Heart right ventricle (tissue), 16 donors: ENCODE measurements at regions of chr7 and their contacts with region 1.

Region 1: GRCh38 chr7:92833024-92833765 is 3.2 kb downstream of the CDK6 start:
- DNase-seq: peak; percentile 85 to 87
- ATAC-seq: peak; percentile 73 to 91 (median 80)
- H3K4me3 ChIP-seq: peak overlapping the region; percentile 71 to 95 (median 88)
- H3K27ac ChIP-seq: peak overlapping the region; percentile 86 to 98 (median 92)
- H3K4me1 ChIP-seq: peaks cover 0 to 51% (median 47%) of the 10 kb centered on the region in 9 donors
- H3K27me3 ChIP-seq: no peaks in the 10 kb centered on the region
- CTCF ChIP-seq: peak; percentile 74 to 90 (median 89)

Region 2: GRCh38 chr7:92621026-92621540 is 212.1 kb before region 1 on chr7:
- intact Hi-C with region 1: loop called in 7 of 10 experiments (anchors 1 to 5 kb)
- DNase-seq: peak; percentile 24 to 74
- ATAC-seq: peak; percentile 86 to 90 (median 88)
- H3K4me3 ChIP-seq: no peak overlapping the region
- H3K27ac ChIP-seq: peak overlapping the region in 5 of 10 donors; percentile 8 to 58 (median 41)
- H3K4me1 ChIP-seq: peaks cover 3 to 29% (median 14%) of the 10 kb centered on the region in 9 donors
- H3K27me3 ChIP-seq: no peaks in the 10 kb centered on the region
- CTCF ChIP-seq: peak; percentile 60 to 86 (median 78)

Region 3: GRCh38 chr7:92633211-92633906 is 199.8 kb before region 1 on chr7:
- intact Hi-C with region 1: loop called in 2 of 10 experiments (anchors 5 kb)
- DNase-seq: peak in 1 of 2 donors; percentile 23
- ATAC-seq: peak; percentile 80 to 93 (median 90)
- H3K4me3 ChIP-seq: peak overlapping the region in 1 of 10 donors; percentile 2
- H3K27ac ChIP-seq: peak overlapping the region; percentile 13 to 70 (median 50)
- H3K4me1 ChIP-seq: peaks cover 9 to 57% (median 52%) of the 10 kb centered on the region in 9 donors
- H3K27me3 ChIP-seq: no peaks in the 10 kb centered on the region
- CTCF ChIP-seq: no peak

Region 4: GRCh38 chr7:92669616-92670165 is 163.5 kb before region 1 on chr7:
- intact Hi-C with region 1: no loop called
- DNase-seq: no peak
- ATAC-seq: peak in 1 of 8 donors; percentile 29
- H3K4me3 ChIP-seq: no peak overlapping the region
- H3K27ac ChIP-seq: no peak overlapping the region
- H3K4me1 ChIP-seq: peaks cover 0 to 18% (median 4%) of the 10 kb centered on the region in 9 donors
- H3K27me3 ChIP-seq: no peaks in the 10 kb centered on the region
- CTCF ChIP-seq: no peak

Region 5: GRCh38 chr7:92691578-92691977 is 141.6 kb before region 1 on chr7:
- intact Hi-C with region 1: loop called (anchors 1 to 5 kb)
- DNase-seq: no peak
- ATAC-seq: peak in 1 of 8 donors; percentile 47
- H3K4me3 ChIP-seq: no peak overlapping the region
- H3K27ac ChIP-seq: no peak overlapping the region
- H3K4me1 ChIP-seq: peaks cover 0 to 29% (median 16%) of the 10 kb centered on the region in 9 donors
- H3K27me3 ChIP-seq: no peaks in the 10 kb centered on the region
- CTCF ChIP-seq: peak; percentile 31 to 71 (median 54)

Region 6: GRCh38 chr7:92717993-92718716 is 115.0 kb before region 1 on chr7:
- intact Hi-C with region 1: loop called in 3 of 10 experiments (anchors 5 to 10 kb)
- DNase-seq: peak; percentile 24 to 80
- ATAC-seq: peak; percentile 80 to 95 (median 92)
- H3K4me3 ChIP-seq: peak overlapping the region in 9 of 10 donors; percentile 14 to 57 (median 42)
- H3K27ac ChIP-seq: peak overlapping the region; percentile 78 to 94 (median 88)
- H3K4me1 ChIP-seq: peaks cover under 1 to 54% (median 30%) of the 10 kb centered on the region in 9 donors
- H3K27me3 ChIP-seq: no peaks in the 10 kb centered on the region
- CTCF ChIP-seq: no peak

Region 7: DNA sequence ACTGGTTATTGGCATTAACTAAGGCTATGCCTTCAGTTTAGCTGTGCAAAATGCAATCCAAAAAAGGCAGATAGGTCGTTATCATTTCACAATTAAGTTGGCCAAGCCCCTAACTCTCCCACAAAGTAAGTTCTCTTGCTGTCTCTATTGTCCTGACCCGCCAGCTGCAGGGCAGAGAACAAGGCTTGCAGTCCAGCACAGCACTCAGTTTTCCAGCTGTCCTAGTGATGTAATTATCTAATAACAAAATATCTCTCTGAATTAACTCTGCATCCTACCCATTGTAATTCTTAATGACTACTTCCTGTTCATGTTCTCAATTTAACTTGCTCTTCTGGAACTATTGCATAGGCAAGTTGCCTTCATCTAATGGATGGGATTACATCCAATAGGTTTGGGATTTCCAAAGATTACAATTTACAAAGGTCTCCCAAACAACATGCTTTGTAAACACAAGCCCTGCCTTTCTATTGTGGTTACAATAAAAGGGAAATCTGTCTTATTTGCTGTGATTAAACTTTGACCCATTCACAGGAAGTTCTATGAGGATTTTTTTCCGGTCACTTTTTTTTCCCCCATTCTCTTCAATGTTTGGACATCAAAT is 52.0 kb before region 1 on chr7:
- intact Hi-C with region 1: loop called in 4 of 10 experiments (anchors 5 to 10 kb)
- DNase-seq: peak; percentile 31 to 51
- ATAC-seq: peak; percentile 85 to 94 (median 90)
- H3K4me3 ChIP-seq: no peak overlapping the region
- H3K27ac ChIP-seq: peak overlapping the region in 8 of 10 donors; percentile 9 to 69 (median 37)
- H3K4me1 ChIP-seq: peaks cover 0 to 66% (median 46%) of the 10 kb centered on the region in 9 donors
- H3K27me3 ChIP-seq: no peaks in the 10 kb centered on the region
- CTCF ChIP-seq: no peak

Region 8: GRCh38 chr7:93043385-93043985 is 210.3 kb after region 1 on chr7:
- intact Hi-C with region 1: loop called in 1 of 10 experiments (anchors 5 kb)
- DNase-seq: peak in 1 of 2 donors; percentile 24
- ATAC-seq: peak; percentile 8 to 70 (median 42)
- H3K4me3 ChIP-seq: peak overlapping the region in 8 of 10 donors; percentile 16 to 40 (median 31)
- H3K27ac ChIP-seq: no peak overlapping the region
- H3K4me1 ChIP-seq: peaks cover 0 to 5% (median 0%) of the 10 kb centered on the region in 9 donors
- H3K27me3 ChIP-seq: no peaks in the 10 kb centered on the region
- CTCF ChIP-seq: no peak